CD4-positive, alpha-beta memory T cell (primary cell): ENCODE measurements at regions of chr12 and their contacts with region 1.

Region 1: GRCh38 chr12:23204933-23205778 is 580.2 kb downstream of the ETNK1 start:
- DNase-seq: peak in 4 of 5 donors; percentile 33 to 44 (median 35)
- H3K4me3 ChIP-seq: no peak overlapping the region
- H3K4me3 Mint-ChIP-seq: no peak overlapping the region
- H3K27ac ChIP-seq: no peak overlapping the region
- H3K27ac Mint-ChIP-seq: no peak overlapping the region
- H3K4me1 ChIP-seq: no peaks in the 10 kb centered on the region
- H3K4me1 Mint-ChIP-seq: peaks cover 0 to 3% (median 0%) of the 10 kb centered on the region in 4 donors
- H3K27me3 ChIP-seq: no peaks in the 10 kb centered on the region
- H3K27me3 Mint-ChIP-seq: peaks cover 0 to 2% of the 10 kb centered on the region in 2 donors

Region 2: GRCh38 chr12:22759769-22760674 is 445.1 kb before region 1 on chr12:
- CTCF ChIA-PET with region 1: no interaction called
- POLR2A ChIA-PET with region 1: no interaction called
- intact Hi-C with region 1: no loop called
- DNase-seq: no peak
- H3K4me3 ChIP-seq: no peak overlapping the region
- H3K4me3 Mint-ChIP-seq: no peak overlapping the region
- H3K27ac ChIP-seq: no peak overlapping the region
- H3K27ac Mint-ChIP-seq: no peak overlapping the region
- H3K4me1 ChIP-seq: no peaks in the 10 kb centered on the region
- H3K4me1 Mint-ChIP-seq: no peaks in the 10 kb centered on the region
- H3K27me3 ChIP-seq: no peaks in the 10 kb centered on the region
- H3K27me3 Mint-ChIP-seq: no peaks in the 10 kb centered on the region

Region 3: GRCh38 chr12:23944067-23944466 is 738.9 kb after region 1 on chr12:
- CTCF ChIA-PET with region 1: no interaction called
- POLR2A ChIA-PET with region 1: no interaction called
- intact Hi-C with region 1: no loop called
- DNase-seq: no peak
- H3K4me3 ChIP-seq: no peak overlapping the region
- H3K4me3 Mint-ChIP-seq: no peak overlapping the region
- H3K27ac ChIP-seq: no peak overlapping the region
- H3K27ac Mint-ChIP-seq: no peak overlapping the region
- H3K4me1 ChIP-seq: no peaks in the 10 kb centered on the region
- H3K4me1 Mint-ChIP-seq: no peaks in the 10 kb centered on the region
- H3K27me3 ChIP-seq: no peaks in the 10 kb centered on the region
- H3K27me3 Mint-ChIP-seq: no peaks in the 10 kb centered on the region

Region 4: GRCh38 chr12:24778486-24779304 is 1573.5 kb after region 1 on chr12:
- CTCF ChIA-PET with region 1: interaction called, 7 read pairs
- POLR2A ChIA-PET with region 1: no interaction called
- intact Hi-C with region 1: loop called (anchors 2 kb)
- DNase-seq: no peak
- H3K4me3 ChIP-seq: no peak overlapping the region
- H3K4me3 Mint-ChIP-seq: no peak overlapping the region
- H3K27ac ChIP-seq: no peak overlapping the region
- H3K27ac Mint-ChIP-seq: no peak overlapping the region
- H3K4me1 ChIP-seq: no peaks in the 10 kb centered on the region
- H3K4me1 Mint-ChIP-seq: no peaks in the 10 kb centered on the region
- H3K27me3 ChIP-seq: no peaks in the 10 kb centered on the region
- H3K27me3 Mint-ChIP-seq: peaks cover 3 to 14% of the 10 kb centered on the region in 2 donors